ENCODE measurements at regions of chr17 and their contacts with region 1.

Region 1: DNA sequence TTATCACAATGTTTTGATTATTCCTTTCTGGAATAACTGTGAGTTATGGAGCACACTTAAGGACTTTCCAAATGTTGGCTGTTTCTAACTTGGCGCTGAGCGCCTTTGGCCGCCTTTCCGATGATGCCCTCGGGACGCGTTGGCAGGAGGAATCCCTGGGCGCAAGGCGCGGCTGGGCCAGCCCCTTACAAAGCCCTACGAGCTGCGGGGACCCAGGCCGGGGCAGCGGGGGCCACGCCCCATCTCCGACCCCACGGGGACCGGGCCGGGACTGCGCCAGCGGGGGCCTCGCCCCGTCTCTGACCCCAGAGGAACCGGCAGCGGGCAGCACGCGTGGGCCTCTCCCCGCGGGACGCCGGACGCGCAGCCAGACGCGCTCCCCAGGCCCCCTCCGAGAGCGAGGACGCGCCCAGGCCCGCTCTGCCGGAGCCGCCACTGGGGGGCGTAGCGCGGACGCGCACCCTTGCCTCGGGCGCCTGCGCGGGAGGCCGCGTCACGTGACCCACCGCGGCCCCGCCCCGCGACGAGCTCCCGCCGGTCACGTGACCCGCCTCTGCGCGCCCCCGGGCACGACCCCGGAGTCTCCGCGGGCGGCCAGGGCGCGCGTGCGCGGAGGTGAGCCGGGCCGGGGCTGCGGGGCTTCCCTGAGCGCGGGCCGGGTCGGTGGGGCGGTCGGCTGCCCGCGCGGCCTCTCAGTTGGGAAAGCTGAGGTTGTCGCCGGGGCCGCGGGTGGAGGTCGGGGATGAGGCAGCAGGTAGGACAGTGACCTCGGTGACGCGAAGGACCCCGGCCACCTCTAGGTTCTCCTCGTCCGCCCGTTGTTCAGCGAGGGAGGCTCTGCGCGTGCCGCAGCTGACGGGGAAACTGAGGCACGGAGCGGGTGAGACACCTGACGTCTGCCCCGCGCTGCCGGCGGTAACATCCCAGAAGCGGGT is at the start of gene GAA:
- DNase-seq: peak; percentile 62
- ATAC-seq: peak; percentile 75
- H3K4me3 ChIP-seq: peak within 1 kb of the TSS; percentile 84 to 100 (median 91)
- H3K27ac ChIP-seq: peak within 1 kb of the TSS; percentile 68
- H3K4me1 ChIP-seq: peaks cover 49% of the 10 kb centered on the region
- H3K27me3 ChIP-seq: peaks cover 2 to 31% of the 10 kb centered on the region in 2 experiments; a peak in 3 of 5 replicates
- CTCF ChIP-seq: peak; percentile 86
- EP300 ChIP-seq: peak; percentile 12 to 73; a peak in 2 of 4 replicates
- POLR2A ChIP-seq: peak in 1 of 2 experiments; percentile 82; a peak in 3 of 4 replicates
- RAD21 ChIP-seq: peak; percentile 96
- total RNA-seq, gene GAA: 13.4 and 36.4 TPM in 2 replicates

Region 2: GRCh38 chr17:80082403-80083135 is 18.7 kb before region 1 on chr17:
- CTCF ChIA-PET with region 1: interaction called, 5 read pairs
- POLR2A ChIA-PET with region 1: interaction called, 13 read pairs
- in situ Hi-C with region 1: no loop called
- intact Hi-C with region 1: no loop called
- DNase-seq: peak; percentile 78
- ATAC-seq: peak; percentile 72
- H3K4me3 ChIP-seq: peak overlapping the region in 1 of 3 experiments; percentile 32; a peak in 2 of 6 replicates
- H3K27ac ChIP-seq: no peak overlapping the region
- H3K4me1 ChIP-seq: peaks cover 23% of the 10 kb centered on the region
- H3K27me3 ChIP-seq: peaks cover 8 to 47% of the 10 kb centered on the region in 2 experiments
- CTCF ChIP-seq: peak; percentile 89
- EP300 ChIP-seq: no peak
- POLR2A ChIP-seq: no peak
- RAD21 ChIP-seq: peak; percentile 71

Region 3: DNA sequence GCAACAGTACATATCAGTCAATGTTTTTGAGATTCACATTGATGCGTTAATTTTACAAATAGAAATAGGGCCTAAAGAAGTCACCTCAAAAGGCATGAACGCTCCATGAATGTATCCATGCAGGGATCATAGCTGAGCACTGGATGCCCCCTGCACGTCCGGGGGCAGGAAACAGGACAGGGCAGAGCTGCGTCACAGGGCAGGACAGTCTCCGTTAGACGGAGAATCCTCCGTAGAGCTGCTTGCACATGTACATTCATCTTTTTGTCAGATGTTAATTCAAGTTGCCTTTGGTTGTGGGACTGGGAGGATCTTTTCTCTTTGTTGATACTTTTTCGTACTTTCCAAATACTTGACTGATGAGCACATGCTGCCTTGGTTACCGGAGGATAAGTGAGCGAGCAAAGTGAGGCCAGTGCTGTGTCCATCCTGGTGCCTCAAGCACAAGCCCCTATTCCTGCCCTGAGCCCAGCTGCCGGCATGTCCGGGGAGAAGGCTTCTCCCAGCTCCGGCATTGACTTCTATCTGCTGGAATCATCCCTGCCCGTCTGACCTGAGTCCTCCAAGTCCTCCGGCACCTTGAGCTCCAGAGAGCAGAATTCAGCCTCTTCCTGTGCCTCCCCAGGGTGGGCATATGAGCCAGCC is 15.1 kb after region 1 on chr17:
- CTCF ChIA-PET with region 1: no interaction called
- POLR2A ChIA-PET with region 1: interaction called, 13 read pairs
- in situ Hi-C with region 1: no loop called
- intact Hi-C with region 1: no loop called
- DNase-seq: no peak
- ATAC-seq: no peak
- H3K4me3 ChIP-seq: no peak overlapping the region
- H3K27ac ChIP-seq: no peak overlapping the region
- H3K4me1 ChIP-seq: no peaks in the 10 kb centered on the region
- H3K27me3 ChIP-seq: no peaks in the 10 kb centered on the region
- CTCF ChIP-seq: no peak
- EP300 ChIP-seq: no peak
- POLR2A ChIP-seq: no peak
- RAD21 ChIP-seq: no peak

Region 4: DNA sequence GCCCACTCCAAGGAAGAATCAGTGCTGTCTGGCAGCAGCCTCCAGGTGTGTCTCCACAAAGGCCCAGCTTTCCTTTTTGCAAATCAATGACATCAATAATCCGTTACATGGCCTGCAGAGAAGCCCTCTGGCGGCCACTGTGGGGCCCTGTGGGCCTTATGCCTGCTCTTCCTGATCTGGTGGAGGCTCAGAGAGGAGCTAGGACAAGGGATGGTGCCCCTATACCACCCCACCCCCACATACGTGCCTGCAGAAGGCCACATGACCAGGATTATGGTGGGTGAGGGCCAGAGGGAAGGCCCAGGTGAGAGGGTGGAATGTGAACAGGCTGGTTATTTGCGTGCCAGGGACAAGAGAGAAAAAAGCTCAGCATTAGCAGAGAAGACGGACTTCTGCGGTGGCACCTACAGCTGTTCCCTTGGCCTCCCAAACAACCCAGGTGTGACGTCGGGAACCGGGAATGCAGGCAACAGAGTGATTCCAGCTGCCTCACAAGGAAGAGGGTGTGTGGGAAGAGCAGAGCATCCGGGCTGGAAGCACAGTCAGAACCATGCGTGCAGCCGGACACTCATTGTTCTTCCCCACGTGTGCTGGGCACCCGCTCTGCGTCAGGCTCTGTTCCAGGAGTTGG is 23.2 kb after region 1 on chr17:
- CTCF ChIA-PET with region 1: no interaction called
- POLR2A ChIA-PET with region 1: interaction called, 18 read pairs
- in situ Hi-C with region 1: no loop called
- intact Hi-C with region 1: no loop called
- DNase-seq: peak; percentile 75
- ATAC-seq: peak; percentile 95
- H3K4me3 ChIP-seq: peak overlapping the region in 1 of 3 experiments; percentile 0; a peak in 1 of 6 replicates
- H3K27ac ChIP-seq: no peak overlapping the region
- H3K4me1 ChIP-seq: peaks cover 20% of the 10 kb centered on the region
- H3K27me3 ChIP-seq: no peaks in the 10 kb centered on the region; a peak in 2 of 5 replicates
- CTCF ChIP-seq: peak; percentile 89
- EP300 ChIP-seq: 0 out of 4 replicates have a peak, but pooled peaks of 1 of the 2 experiments have one; percentile 23
- POLR2A ChIP-seq: no peak
- RAD21 ChIP-seq: peak; percentile 84

Region 5: GRCh38 chr17:80203471-80203963 is 102.2 kb after region 1 on chr17:
- CTCF ChIA-PET with region 1: no interaction called
- POLR2A ChIA-PET with region 1: no interaction called
- in situ Hi-C with region 1: no loop called
- intact Hi-C with region 1: no loop called
- DNase-seq: no peak
- ATAC-seq: peak; percentile 17
- H3K4me3 ChIP-seq: no peak overlapping the region
- H3K27ac ChIP-seq: no peak overlapping the region
- H3K4me1 ChIP-seq: peaks cover 8% of the 10 kb centered on the region
- H3K27me3 ChIP-seq: peaks cover 0 to 7% of the 10 kb centered on the region in 2 experiments; a peak in 2 of 5 replicates
- CTCF ChIP-seq: no peak; the same call in 1 of the 2 replicates
- EP300 ChIP-seq: no peak
- POLR2A ChIP-seq: no peak
- RAD21 ChIP-seq: no peak

Measured in HepG2 (cell line).